T-cell (primary cell): ENCODE measurements at regions of chr1 and their contacts with region 1.

Region 1: DNA sequence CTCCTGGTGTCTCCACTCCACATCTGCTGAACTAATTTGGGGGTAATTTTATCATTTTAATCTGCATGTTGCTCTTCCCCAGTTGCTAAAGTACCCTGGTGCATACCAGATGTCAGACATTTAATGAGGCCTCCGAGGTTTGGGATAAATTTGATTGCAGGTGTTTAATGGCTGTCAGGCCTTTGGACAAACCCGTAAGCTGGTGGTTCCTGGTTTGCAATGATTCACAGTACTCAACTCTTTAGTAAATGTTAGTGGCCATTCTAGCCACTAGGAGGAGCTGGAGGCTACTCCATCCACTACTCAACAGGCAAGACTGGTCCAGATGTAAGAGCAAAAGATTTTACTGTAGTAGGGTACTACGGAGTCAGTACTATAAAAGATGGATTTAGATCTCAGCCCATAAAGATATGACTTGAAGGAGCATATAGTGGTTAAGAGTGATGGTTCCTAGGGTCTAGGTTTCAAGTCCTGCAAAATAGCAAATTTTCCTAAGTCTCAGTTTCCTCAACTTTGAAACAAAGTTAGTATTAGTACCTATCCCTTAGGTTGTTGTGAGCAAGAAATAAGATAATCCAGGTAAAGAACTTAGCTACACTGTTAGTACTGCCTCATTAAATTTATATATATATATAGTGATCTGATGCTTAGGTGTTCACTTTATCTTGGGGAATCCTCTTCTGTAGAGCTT is 132.8 kb downstream of the SNX7 start:
- DNase-seq: peak in 33 of 35 experiments; percentile 14 to 83 (median 45)
- ATAC-seq: peak; percentile 80 to 93 (median 87)
- H3K4me3 ChIP-seq: no peak overlapping the region
- H3K4me3 Mint-ChIP-seq: no peak overlapping the region
- H3K27ac ChIP-seq: no peak overlapping the region
- H3K27ac Mint-ChIP-seq: no peak overlapping the region
- H3K4me1 ChIP-seq: peaks cover 0 to 13% of the 10 kb centered on the region in 2 experiments
- H3K4me1 Mint-ChIP-seq: peaks cover 27 to 35% (median 29%) of the 10 kb centered on the region in 3 donors
- H3K27me3 ChIP-seq: no peaks in the 10 kb centered on the region
- H3K27me3 Mint-ChIP-seq: no peaks in the 10 kb centered on the region

Region 2: GRCh38 chr1:98188774-98189173 is 605.6 kb before region 1 on chr1:
- CTCF ChIA-PET with region 1: no interaction called
- POLR2A ChIA-PET with region 1: no interaction called
- DNase-seq: no peak
- ATAC-seq: no peak
- H3K4me3 ChIP-seq: no peak overlapping the region
- H3K4me3 Mint-ChIP-seq: no peak overlapping the region
- H3K27ac ChIP-seq: no peak overlapping the region
- H3K27ac Mint-ChIP-seq: no peak overlapping the region
- H3K4me1 ChIP-seq: no peaks in the 10 kb centered on the region
- H3K4me1 Mint-ChIP-seq: no peaks in the 10 kb centered on the region
- H3K27me3 ChIP-seq: no peaks in the 10 kb centered on the region
- H3K27me3 Mint-ChIP-seq: no peaks in the 10 kb centered on the region

Region 3: DNA sequence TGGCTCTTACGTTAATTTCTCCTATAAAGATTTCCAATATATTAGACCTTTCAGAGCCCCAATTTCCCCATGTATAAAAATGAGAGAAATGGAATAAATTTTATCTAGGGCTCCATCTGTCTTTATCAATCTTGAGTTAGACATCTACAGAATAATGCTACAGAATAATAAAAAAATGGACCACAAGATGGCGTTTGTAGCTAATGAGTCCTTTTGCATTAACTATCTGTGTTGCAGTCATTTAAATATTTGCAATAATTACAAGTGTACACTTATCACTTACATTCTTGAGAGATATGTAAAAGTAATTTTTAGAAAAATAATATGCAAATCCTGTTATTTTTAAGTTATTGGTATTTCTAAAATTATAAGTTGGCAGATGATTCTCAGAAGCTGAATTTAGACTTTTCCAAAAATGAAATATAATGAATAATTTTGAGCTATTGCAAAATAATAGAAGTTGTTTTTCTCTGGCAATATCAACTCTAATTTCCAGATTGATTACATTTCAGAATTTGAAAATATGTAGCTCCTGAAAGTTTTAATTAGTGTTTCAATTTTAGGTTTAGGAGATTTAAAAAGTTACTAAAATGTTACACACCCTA is 45.1 kb before region 1 on chr1:
- CTCF ChIA-PET with region 1: interaction called in 1 of 2 experiments, 10 read pairs
- POLR2A ChIA-PET with region 1: interaction called in 1 of 2 experiments, 3 read pairs
- DNase-seq: peak in 1 of 35 experiments; percentile 40
- ATAC-seq: no peak
- H3K4me3 ChIP-seq: no peak overlapping the region
- H3K4me3 Mint-ChIP-seq: no peak overlapping the region
- H3K27ac ChIP-seq: no peak overlapping the region
- H3K27ac Mint-ChIP-seq: no peak overlapping the region
- H3K4me1 ChIP-seq: no peaks in the 10 kb centered on the region
- H3K4me1 Mint-ChIP-seq: no peaks in the 10 kb centered on the region
- H3K27me3 ChIP-seq: no peaks in the 10 kb centered on the region
- H3K27me3 Mint-ChIP-seq: peaks cover 0 to 7% of the 10 kb centered on the region in 2 donors

Region 4: GRCh38 chr1:99481391-99481996 is 687.2 kb after region 1 on chr1:
- CTCF ChIA-PET with region 1: interaction called, 19 to 24 read pairs
- POLR2A ChIA-PET with region 1: no interaction called
- DNase-seq: peak in 25 of 35 experiments; percentile 1 to 63 (median 15)
- ATAC-seq: peak in 1 of 4 experiments; percentile 53
- H3K4me3 ChIP-seq: no peak overlapping the region
- H3K4me3 Mint-ChIP-seq: no peak overlapping the region
- H3K27ac ChIP-seq: no peak overlapping the region
- H3K27ac Mint-ChIP-seq: no peak overlapping the region
- H3K4me1 ChIP-seq: no peaks in the 10 kb centered on the region
- H3K4me1 Mint-ChIP-seq: no peaks in the 10 kb centered on the region
- H3K27me3 ChIP-seq: no peaks in the 10 kb centered on the region
- H3K27me3 Mint-ChIP-seq: peaks cover 7 to 27% of the 10 kb centered on the region in 2 donors